Panc1 (cell line): ENCODE measurements at regions of chr2 and their contacts with region 1.

Region 1: GRCh38 chr2:68039317-68039716 is 23.5 kb downstream of the C1D start:
- DNase-seq: no peak
- ATAC-seq: no peak
- H3K4me3 ChIP-seq: no peak overlapping the region
- H3K27ac ChIP-seq: no peak overlapping the region
- H3K4me1 ChIP-seq: no peaks in the 10 kb centered on the region
- H3K27me3 ChIP-seq: no peaks in the 10 kb centered on the region
- CTCF ChIP-seq: no peak

Region 2: GRCh38 chr2:68009526-68009925 is 29.8 kb before region 1 on chr2:
- CTCF ChIA-PET with region 1: no interaction called
- POLR2A ChIA-PET with region 1: no interaction called
- in situ Hi-C with region 1: no loop called
- intact Hi-C with region 1: no loop called
- DNase-seq: no peak
- ATAC-seq: no peak
- H3K4me3 ChIP-seq: no peak overlapping the region
- H3K27ac ChIP-seq: no peak overlapping the region
- H3K4me1 ChIP-seq: no peaks in the 10 kb centered on the region
- H3K27me3 ChIP-seq: no peaks in the 10 kb centered on the region
- CTCF ChIP-seq: no peak

Region 3: DNA sequence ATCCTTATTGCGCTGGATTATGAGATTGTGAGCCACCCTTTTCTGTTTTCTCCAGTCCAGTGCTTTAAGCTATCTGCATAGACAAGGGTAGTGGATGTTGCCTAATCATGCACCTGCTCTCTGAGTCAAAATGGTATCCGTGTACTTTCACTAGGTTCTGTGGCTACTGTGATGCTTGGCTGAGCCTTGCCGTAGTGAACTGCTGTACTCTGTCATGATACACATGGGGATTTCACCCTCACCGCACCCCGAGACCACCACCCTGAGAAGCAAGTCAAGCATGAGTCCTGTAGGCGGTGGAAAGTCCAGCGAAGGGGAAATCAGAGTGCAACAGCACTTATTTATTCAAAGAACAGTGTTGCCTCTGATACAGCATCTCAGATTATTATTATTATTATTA is 750.3 kb after region 1 on chr2:
- CTCF ChIA-PET with region 1: no interaction called
- POLR2A ChIA-PET with region 1: interaction called, 12 read pairs
- in situ Hi-C with region 1: no loop called
- intact Hi-C with region 1: no loop called
- DNase-seq: no peak
- ATAC-seq: no peak
- H3K4me3 ChIP-seq: no peak overlapping the region
- H3K27ac ChIP-seq: no peak overlapping the region
- H3K4me1 ChIP-seq: no peaks in the 10 kb centered on the region
- H3K27me3 ChIP-seq: peaks cover 2% of the 10 kb centered on the region; the same call in 1 of the 2 replicates
- CTCF ChIP-seq: no peak